ENCODE measurements at regions of chr18 and their contacts with region 1.

Region 1: DNA sequence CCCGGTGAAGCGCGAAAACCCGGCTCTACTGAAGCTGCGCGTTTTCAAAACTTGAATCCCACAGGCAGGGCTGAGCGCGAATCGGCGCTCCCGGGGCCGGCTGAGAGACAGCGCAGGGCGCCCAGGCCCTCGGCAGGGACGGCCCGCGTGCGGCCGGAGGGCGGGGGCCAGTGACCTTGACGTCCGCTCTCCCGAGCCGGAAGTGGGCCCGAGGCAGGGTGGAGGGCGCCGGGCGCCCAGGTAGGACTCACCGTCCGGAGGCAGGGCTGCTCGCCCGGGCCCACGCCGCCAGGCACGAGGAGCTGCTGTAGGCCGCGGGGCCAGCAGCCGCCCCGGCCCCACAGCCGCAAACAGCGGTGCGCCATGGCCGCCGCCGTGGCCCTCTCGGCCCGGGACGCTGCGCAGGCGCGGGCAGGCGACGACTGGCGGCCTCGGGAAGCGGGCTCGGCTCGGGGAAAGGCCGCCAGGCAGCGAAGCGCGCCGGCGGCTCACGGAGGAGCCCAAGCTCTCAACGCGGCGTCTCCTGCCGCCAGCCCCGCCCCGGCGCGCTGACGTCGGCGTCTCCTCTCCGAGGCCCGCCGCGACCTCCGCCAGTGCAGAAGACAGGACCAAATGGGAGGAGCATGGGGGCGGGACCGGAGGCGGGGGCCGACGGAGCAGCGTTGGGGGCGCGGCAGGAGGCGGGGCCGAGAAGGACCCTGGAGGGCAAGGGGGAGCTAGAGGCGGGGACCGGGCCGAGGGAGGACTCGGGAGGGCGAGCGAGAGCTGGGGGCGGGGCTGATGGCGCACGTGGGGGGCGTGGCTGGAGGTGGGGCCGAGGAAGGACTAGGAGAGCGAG is at the start of gene AFG3L2:
- DNase-seq: peak; percentile 100
- ATAC-seq: peak; percentile 86 to 96 (median 87)
- H3K4me3 ChIP-seq: peak within 1 kb of the TSS; percentile 74
- H3K4me3 Mint-ChIP-seq: peak within 1 kb of the TSS; percentile 95
- H3K27ac ChIP-seq: peak within 1 kb of the TSS; percentile 90
- H3K27ac Mint-ChIP-seq: peak within 1 kb of the TSS; percentile 89 to 93
- H3K4me1 ChIP-seq: peaks cover 23% of the 10 kb centered on the region
- H3K4me1 Mint-ChIP-seq: peaks cover 24 to 37% of the 10 kb centered on the region in 2 donors
- H3K27me3 ChIP-seq: no peaks in the 10 kb centered on the region
- H3K27me3 Mint-ChIP-seq: peaks cover 0 to 10% of the 10 kb centered on the region in 2 donors
- CTCF ChIP-seq: no peak
- total RNA-seq, gene AFG3L2: 31.9 to 36.4 (median 35.9) TPM

Region 2: GRCh38 chr18:11980555-11981382 is 396.2 kb before region 1 on chr18:
- intact Hi-C with region 1: loop called (anchors 10 kb)
- DNase-seq: peak; percentile 81 to 97
- ATAC-seq: peak; percentile 87 to 95 (median 88)
- H3K4me3 ChIP-seq: peak overlapping the region; percentile 51
- H3K4me3 Mint-ChIP-seq: peak overlapping the region; percentile 87
- H3K27ac ChIP-seq: peak overlapping the region; percentile 0
- H3K27ac Mint-ChIP-seq: peak overlapping the region; percentile 51 to 79
- H3K4me1 ChIP-seq: peaks cover 16% of the 10 kb centered on the region
- H3K4me1 Mint-ChIP-seq: peaks cover 6 to 18% of the 10 kb centered on the region in 2 donors
- H3K27me3 ChIP-seq: no peaks in the 10 kb centered on the region
- H3K27me3 Mint-ChIP-seq: no peaks in the 10 kb centered on the region
- CTCF ChIP-seq: no peak

Region 3: GRCh38 chr18:12327510-12328178 is 49.3 kb before region 1 on chr18:
- intact Hi-C with region 1: no loop called
- DNase-seq: peak; percentile 64 to 76
- ATAC-seq: peak; percentile 75 to 92 (median 80)
- H3K4me3 ChIP-seq: no peak overlapping the region
- H3K4me3 Mint-ChIP-seq: no peak overlapping the region
- H3K27ac ChIP-seq: no peak overlapping the region
- H3K27ac Mint-ChIP-seq: peak overlapping the region; percentile 38 to 63
- H3K4me1 ChIP-seq: peaks cover 7% of the 10 kb centered on the region
- H3K4me1 Mint-ChIP-seq: peaks cover 14 to 16% of the 10 kb centered on the region in 2 donors
- H3K27me3 ChIP-seq: no peaks in the 10 kb centered on the region
- H3K27me3 Mint-ChIP-seq: no peaks in the 10 kb centered on the region
- CTCF ChIP-seq: peak; percentile 58

Region 4: DNA sequence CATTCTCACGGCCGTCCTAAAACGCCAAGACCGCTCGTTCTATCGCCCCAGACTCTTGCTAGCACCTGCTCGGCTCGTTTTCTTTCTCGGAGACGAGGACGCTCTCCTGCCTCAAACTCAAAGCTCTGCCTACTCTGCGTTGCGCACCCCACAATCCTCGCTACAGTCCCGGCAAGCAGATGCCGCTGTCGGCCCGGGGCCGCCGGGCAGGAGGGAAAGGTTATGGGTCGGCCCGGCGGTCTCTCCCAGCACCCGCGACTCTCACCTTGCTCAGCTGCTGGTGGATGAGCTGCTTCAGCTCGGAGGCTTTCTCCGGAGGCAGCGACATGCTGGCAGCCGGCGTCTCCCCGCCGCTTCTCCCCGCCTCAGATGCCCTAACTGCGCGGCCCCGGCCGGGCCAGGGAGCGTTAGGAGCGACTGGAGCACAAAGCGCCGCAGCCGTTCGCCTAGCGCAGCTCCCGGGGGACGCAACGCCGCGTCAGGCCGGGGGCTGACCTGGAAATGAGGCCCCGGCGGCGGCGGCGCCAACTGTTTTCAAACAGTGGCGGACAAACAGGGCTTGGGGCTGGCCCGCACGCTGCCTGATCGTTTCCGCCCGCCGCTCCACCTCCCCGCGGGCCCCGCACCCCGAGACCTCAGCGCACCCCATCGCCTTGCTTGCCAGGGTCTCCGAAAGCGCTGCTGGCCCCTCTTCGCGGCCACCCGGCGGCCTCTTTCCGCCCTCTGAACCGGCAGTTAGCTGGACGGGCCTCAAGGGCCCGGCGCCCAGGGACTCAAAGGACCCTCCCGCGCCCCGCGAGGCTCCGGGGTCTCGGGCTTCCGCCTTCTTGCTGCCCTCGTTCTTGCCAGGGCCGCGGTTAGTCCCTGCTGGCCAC is 325.5 kb after region 1 on chr18 and contains the starts of genes CEP76 and PSMG2:
- intact Hi-C with region 1: loop called (anchors 5 kb)
- DNase-seq: peak; percentile 82 to 88
- ATAC-seq: peak; percentile 81 to 87 (median 83)
- H3K4me3 ChIP-seq: peak within 1 kb of the TSS; percentile 99
- H3K4me3 Mint-ChIP-seq: peak within 1 kb of the TSS; percentile 99
- H3K27ac ChIP-seq: peak within 1 kb of the TSS; percentile 99
- H3K27ac Mint-ChIP-seq: peak within 1 kb of the TSS; percentile 94 to 99
- H3K4me1 ChIP-seq: peaks cover 20% of the 10 kb centered on the region
- H3K4me1 Mint-ChIP-seq: peaks cover 41 to 47% of the 10 kb centered on the region in 2 donors
- H3K27me3 ChIP-seq: no peaks in the 10 kb centered on the region
- H3K27me3 Mint-ChIP-seq: no peaks in the 10 kb centered on the region
- CTCF ChIP-seq: no peak
- total RNA-seq, gene CEP76: 6.4 to 9.8 (median 8.8) TPM
- total RNA-seq, gene PSMG2: 56.7 to 63.4 (median 62.8) TPM

Region 5: DNA sequence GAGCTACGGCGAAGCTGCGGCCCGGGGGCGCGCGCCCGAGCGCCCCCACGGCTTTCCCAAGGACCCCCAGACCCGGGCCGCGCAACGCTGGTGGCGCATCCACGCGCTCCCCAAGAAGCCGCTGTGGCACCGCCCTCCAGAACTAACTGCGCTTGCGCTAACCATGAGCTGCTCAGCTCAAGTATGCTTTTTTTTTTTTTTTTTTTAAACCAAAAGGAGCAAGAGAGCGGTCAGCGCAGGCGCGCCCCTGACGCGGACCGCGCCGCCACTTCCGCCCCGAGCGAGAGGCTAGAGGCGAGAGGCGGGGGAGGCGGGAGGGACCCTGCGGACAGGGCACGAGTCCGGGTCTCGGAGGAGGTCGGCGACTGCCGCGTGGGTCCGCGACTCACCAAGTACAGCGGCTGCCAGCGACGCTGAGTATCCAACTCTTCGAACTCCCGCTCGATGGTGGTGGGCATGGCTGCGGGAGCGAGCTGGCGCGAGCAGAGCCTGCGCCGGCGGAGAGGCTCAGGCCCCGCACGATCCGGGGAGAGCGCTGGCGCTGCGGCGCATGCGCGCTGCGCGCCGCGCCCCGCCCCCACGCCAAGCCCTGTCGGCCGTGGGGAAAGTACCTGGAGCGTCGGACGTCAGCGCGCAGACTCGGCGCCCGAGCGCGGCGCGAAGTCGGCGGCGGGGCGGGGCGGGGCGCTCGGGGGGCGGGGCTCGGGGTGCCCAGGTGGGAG is 506.9 kb after region 1 on chr18 and contains the start of gene PTPN2:
- intact Hi-C with region 1: loop called (anchors 5 kb)
- DNase-seq: peak; percentile 89 to 98
- ATAC-seq: peak; percentile 80 to 93 (median 83)
- H3K4me3 ChIP-seq: peak within 1 kb of the TSS; percentile 80
- H3K4me3 Mint-ChIP-seq: peak within 1 kb of the TSS; percentile 97
- H3K27ac ChIP-seq: peak within 1 kb of the TSS; percentile 100
- H3K27ac Mint-ChIP-seq: peak within 1 kb of the TSS; percentile 86 to 94
- H3K4me1 ChIP-seq: peaks cover 37% of the 10 kb centered on the region
- H3K4me1 Mint-ChIP-seq: peaks cover 56 to 70% of the 10 kb centered on the region in 2 donors
- H3K27me3 ChIP-seq: no peaks in the 10 kb centered on the region
- H3K27me3 Mint-ChIP-seq: no peaks in the 10 kb centered on the region
- CTCF ChIP-seq: no peak
- total RNA-seq, gene PTPN2: 110 to 115 (median 112) TPM

Region 6: DNA sequence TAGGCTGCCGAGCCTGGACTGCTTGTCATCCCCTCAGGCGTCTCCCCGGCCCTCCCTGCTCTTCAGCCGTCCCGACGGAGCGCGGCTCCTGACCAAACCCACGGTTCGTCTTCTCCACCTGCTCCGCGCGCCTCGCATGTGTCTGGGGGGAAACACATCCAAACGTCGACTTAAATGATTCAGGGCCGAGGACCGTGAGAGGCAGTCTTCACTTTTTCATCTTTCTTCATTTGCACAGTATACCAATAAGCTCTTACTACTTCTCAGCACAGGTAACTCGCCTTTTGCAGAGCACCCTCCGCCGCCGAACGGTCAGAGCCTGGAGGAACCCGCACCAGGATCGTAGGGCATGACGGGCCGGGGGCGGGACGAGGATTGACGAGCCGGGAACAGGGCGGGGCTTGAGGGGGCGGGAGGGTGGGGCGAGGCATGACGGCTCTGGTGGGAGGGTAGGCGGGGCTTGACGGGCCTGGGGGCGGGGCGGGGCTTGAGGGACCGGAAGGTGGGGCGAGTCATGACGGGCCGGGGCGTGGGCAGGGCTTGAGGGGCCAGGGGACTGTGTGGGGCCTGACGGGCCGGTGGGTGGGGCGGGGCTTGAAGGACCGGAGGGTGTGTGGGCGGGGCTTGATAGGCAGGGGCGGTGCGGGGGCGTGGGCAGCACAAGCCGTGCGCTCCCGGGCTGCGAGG is 570.6 kb after region 1 on chr18 and contains the start of gene SEH1L:
- intact Hi-C with region 1: loop called (anchors 1 kb)
- DNase-seq: peak; percentile 96 to 98
- ATAC-seq: peak; percentile 86 to 96 (median 86)
- H3K4me3 ChIP-seq: peak within 1 kb of the TSS; percentile 93
- H3K4me3 Mint-ChIP-seq: peak within 1 kb of the TSS; percentile 97
- H3K27ac ChIP-seq: peak within 1 kb of the TSS; percentile 96
- H3K27ac Mint-ChIP-seq: peak within 1 kb of the TSS; percentile 90 to 92
- H3K4me1 ChIP-seq: peaks cover 17% of the 10 kb centered on the region
- H3K4me1 Mint-ChIP-seq: peaks cover 11 to 16% of the 10 kb centered on the region in 2 donors
- H3K27me3 ChIP-seq: no peaks in the 10 kb centered on the region
- H3K27me3 Mint-ChIP-seq: no peaks in the 10 kb centered on the region
- CTCF ChIP-seq: no peak
- total RNA-seq, gene SEH1L: 24.5 to 28.4 (median 26.5) TPM

Region 7: DNA sequence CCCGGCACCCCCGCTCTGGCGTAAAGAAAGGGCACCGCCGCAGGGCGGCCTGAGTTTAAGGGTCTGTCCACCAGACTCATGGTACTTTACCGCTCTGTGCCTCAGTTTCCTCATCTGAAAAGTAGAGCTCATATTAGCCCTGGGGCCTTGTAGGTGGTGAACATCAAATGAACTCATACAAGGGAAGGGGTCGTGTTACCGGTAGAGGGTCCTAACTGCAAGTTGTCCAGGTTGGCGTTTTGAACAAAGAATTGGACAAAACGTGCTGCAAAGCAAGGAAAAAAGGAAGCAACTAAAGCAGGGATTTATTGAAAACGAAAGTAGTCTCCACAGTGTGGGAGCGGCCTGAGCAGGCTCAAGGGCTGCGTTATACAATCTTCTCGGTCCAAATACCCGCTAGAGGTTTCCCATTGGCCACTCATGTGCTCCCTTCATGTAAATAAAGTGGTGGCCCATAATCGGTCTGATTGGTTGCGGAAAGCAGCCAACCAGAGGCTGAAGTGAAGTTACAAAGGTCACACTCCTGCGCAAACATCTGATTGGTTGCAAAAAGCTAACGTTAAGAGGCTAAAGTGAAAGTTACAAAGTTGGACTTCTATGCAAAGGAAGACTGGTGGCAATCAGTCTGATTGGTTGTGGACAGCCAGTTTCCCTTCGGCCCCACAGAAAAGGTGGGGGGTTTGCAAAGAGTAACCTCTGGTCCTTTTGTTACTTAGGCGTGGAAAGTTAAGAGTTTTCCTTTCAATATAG is 760.9 kb after region 1 on chr18:
- intact Hi-C with region 1: loop called (anchors 5 kb)
- DNase-seq: peak; percentile 64 to 86
- ATAC-seq: peak; percentile 87 to 93 (median 92)
- H3K4me3 ChIP-seq: peak overlapping the region; percentile 56
- H3K4me3 Mint-ChIP-seq: peak overlapping the region; percentile 99
- H3K27ac ChIP-seq: peak overlapping the region; percentile 83
- H3K27ac Mint-ChIP-seq: peak overlapping the region; percentile 96
- H3K4me1 ChIP-seq: peaks cover 21% of the 10 kb centered on the region
- H3K4me1 Mint-ChIP-seq: peaks cover 29 to 31% of the 10 kb centered on the region in 2 donors
- H3K27me3 ChIP-seq: no peaks in the 10 kb centered on the region
- H3K27me3 Mint-ChIP-seq: no peaks in the 10 kb centered on the region
- CTCF ChIP-seq: no peak

Region 8: DNA sequence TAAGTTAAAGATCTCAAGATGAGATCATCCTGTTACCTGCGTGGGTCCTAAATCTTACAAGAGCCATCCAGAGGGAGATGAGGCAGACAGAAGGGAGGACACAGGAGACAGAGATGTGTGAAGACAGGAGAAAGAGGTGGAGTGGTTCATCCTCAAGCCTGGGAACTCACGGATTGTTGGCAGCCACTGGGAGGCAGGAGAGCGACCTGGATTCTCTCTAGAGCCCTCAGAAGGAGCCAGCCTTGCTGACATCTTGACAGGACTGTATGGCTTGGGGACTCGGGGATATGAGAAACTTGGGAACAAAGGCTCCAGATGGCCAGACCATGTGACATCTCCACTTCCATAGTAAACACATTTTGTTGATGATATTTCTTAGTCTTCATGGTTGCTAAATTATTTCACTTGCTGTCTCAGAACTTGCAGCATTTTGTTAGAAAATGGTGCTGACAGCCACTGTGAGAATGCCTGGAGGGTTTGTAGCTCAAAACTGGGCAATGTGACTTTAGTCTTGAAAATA is 1596.2 kb after region 1 on chr18:
- intact Hi-C with region 1: no loop called
- DNase-seq: no peak
- ATAC-seq: no peak
- H3K4me3 ChIP-seq: no peak overlapping the region
- H3K4me3 Mint-ChIP-seq: no peak overlapping the region
- H3K27ac ChIP-seq: no peak overlapping the region
- H3K27ac Mint-ChIP-seq: no peak overlapping the region
- H3K4me1 ChIP-seq: no peaks in the 10 kb centered on the region
- H3K4me1 Mint-ChIP-seq: no peaks in the 10 kb centered on the region
- H3K27me3 ChIP-seq: no peaks in the 10 kb centered on the region
- H3K27me3 Mint-ChIP-seq: no peaks in the 10 kb centered on the region
- CTCF ChIP-seq: no peak

Measured in natural killer cell (primary cell).